ENCODE measurements at regions of chr12 and their contacts with region 1.

Region 1: GRCh38 chr12:43758728-43759563 is at the starts of genes IRAK4 and PUS7L:
- DNase-seq: peak; percentile 91
- H3K4me3 Mint-ChIP-seq: peak within 1 kb of the TSS; percentile 96
- H3K27ac Mint-ChIP-seq: peak within 1 kb of the TSS; percentile 97
- H3K4me1 Mint-ChIP-seq: peaks cover 52% of the 10 kb centered on the region
- H3K27me3 Mint-ChIP-seq: no peaks in the 10 kb centered on the region
- total RNA-seq, gene IRAK4: 26.5 and 28.5 TPM in 2 replicates
- total RNA-seq, gene PUS7L: 22.8 and 24.4 TPM in 2 replicates

Region 2: GRCh38 chr12:43805860-43806736 is 47.2 kb after region 1 on chr12 and contains the start of gene TWF1:
- intact Hi-C with region 1: loop called (anchors 1 kb)
- DNase-seq: peak; percentile 84
- H3K4me3 Mint-ChIP-seq: peak within 1 kb of the TSS; percentile 100
- H3K27ac Mint-ChIP-seq: peak within 1 kb of the TSS; percentile 100
- H3K4me1 Mint-ChIP-seq: peaks cover 25% of the 10 kb centered on the region
- H3K27me3 Mint-ChIP-seq: peaks cover 6% of the 10 kb centered on the region
- total RNA-seq, gene TWF1: 21.6 and 22.3 TPM in 2 replicates

Measured in activated T-helper 2 cell treated with anti-CD3 and anti-CD28 coated beads, Interferon-gamma antibody, Interleukin-2, Interleukin-4, amounts not matched to agents 10 μg/mL and 5 μg/mL and 100 μg/mL, durations not matched to agents 14 hours and 24 hours and 36 hours (primary cell).